ENCODE measurements at regions of chr10 and their contacts with region 1.

Region 1: GRCh38 chr10:26860443-26861204 is at the start of gene ABI1:
- DNase-seq: peak; percentile 100
- ATAC-seq: peak; percentile 90
- H3K4me3 ChIP-seq: peak within 1 kb of the TSS; percentile 89 to 100 (median 99)
- H3K4me3 Mint-ChIP-seq: peak within 1 kb of the TSS; percentile 95
- H3K27ac ChIP-seq: peak within 1 kb of the TSS; percentile 88 to 94
- H3K27ac Mint-ChIP-seq: peak within 1 kb of the TSS; percentile 98
- H3K4me1 ChIP-seq: peaks cover 38% of the 10 kb centered on the region in 2 donors
- H3K4me1 Mint-ChIP-seq: peaks cover 34% of the 10 kb centered on the region
- H3K27me3 ChIP-seq: no peaks in the 10 kb centered on the region
- H3K27me3 Mint-ChIP-seq: no peaks in the 10 kb centered on the region
- CTCF ChIP-seq: no peak
- total RNA-seq, gene ABI1: 78.3 and 80.5 TPM in 2 replicates

Region 2: GRCh38 chr10:26448706-26449435 is 411.8 kb before region 1 on chr10:
- CTCF ChIA-PET with region 1: no interaction called
- POLR2A ChIA-PET with region 1: interaction called, 7 read pairs
- intact Hi-C with region 1: loop called (anchors 10 kb)
- DNase-seq: peak; percentile 90
- ATAC-seq: peak; percentile 76
- H3K4me3 ChIP-seq: peak overlapping the region; percentile 18 to 61 (median 33)
- H3K4me3 Mint-ChIP-seq: peak overlapping the region; percentile 79
- H3K27ac ChIP-seq: peak overlapping the region; percentile 91 to 96
- H3K27ac Mint-ChIP-seq: peak overlapping the region; percentile 96
- H3K4me1 ChIP-seq: peaks cover 70 to 73% of the 10 kb centered on the region in 2 donors
- H3K4me1 Mint-ChIP-seq: peaks cover 87% of the 10 kb centered on the region
- H3K27me3 ChIP-seq: no peaks in the 10 kb centered on the region
- H3K27me3 Mint-ChIP-seq: no peaks in the 10 kb centered on the region
- CTCF ChIP-seq: no peak

Region 3: GRCh38 chr10:26737730-26738129 is 122.9 kb before region 1 on chr10:
- CTCF ChIA-PET with region 1: interaction called, 3 read pairs
- POLR2A ChIA-PET with region 1: interaction called, 3 read pairs
- intact Hi-C with region 1: loop called (anchors 1 kb)
- DNase-seq: peak; percentile 86
- ATAC-seq: peak; percentile 69
- H3K4me3 ChIP-seq: no peak overlapping the region
- H3K4me3 Mint-ChIP-seq: peak overlapping the region; percentile 52
- H3K27ac ChIP-seq: peak overlapping the region; percentile 87
- H3K27ac Mint-ChIP-seq: peak overlapping the region; percentile 89
- H3K4me1 ChIP-seq: peaks cover 36 to 49% of the 10 kb centered on the region in 2 donors
- H3K4me1 Mint-ChIP-seq: peaks cover 50% of the 10 kb centered on the region
- H3K27me3 ChIP-seq: no peaks in the 10 kb centered on the region
- H3K27me3 Mint-ChIP-seq: no peaks in the 10 kb centered on the region
- CTCF ChIP-seq: no peak

Region 4: DNA sequence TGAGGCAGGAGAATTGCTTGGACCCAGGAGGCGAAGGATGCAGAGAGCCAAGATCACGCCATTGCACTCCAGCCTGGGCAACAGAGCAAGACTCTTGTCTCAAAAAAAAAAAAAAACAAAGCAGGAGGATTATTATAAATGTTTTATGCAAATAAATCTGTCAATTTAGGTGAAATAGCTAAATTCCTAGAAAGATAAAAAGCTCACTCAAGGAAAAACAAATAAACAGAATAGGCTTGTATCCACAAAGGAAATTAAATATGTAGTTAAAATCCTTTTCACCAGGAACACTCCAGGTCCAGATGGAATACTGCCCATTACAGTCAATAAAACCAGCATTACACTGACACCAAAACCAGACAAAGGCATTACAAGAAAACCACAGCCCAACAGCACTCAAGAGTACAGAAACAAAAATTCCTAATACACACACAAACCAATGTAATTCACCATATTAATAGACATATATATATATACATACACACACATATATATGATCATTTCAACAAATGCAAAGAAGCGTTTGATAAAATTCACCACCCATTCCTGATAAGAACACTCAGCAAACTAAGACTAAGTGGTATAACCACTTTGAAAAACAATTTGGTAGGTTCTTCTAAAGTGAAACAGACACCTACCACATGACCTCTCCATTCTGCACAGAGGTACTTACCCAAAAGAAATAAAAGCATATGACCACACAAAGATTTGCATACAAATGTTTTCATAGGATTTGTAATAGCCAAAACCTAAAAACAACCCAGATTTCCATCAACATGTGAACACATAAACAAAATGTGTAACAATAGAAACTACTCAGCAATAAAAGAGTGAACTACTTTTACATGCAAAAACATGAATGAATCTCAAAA is 38.7 kb before region 1 on chr10:
- CTCF ChIA-PET with region 1: no interaction called
- POLR2A ChIA-PET with region 1: interaction called, 3 read pairs
- intact Hi-C with region 1: loop called (anchors 5 kb)
- DNase-seq: no peak
- ATAC-seq: no peak
- H3K4me3 ChIP-seq: no peak overlapping the region
- H3K4me3 Mint-ChIP-seq: no peak overlapping the region
- H3K27ac ChIP-seq: peak overlapping the region in 1 of 2 donors; percentile 45
- H3K27ac Mint-ChIP-seq: no peak overlapping the region
- H3K4me1 ChIP-seq: peaks cover 4 to 17% of the 10 kb centered on the region in 2 donors
- H3K4me1 Mint-ChIP-seq: peaks cover 61% of the 10 kb centered on the region
- H3K27me3 ChIP-seq: no peaks in the 10 kb centered on the region
- H3K27me3 Mint-ChIP-seq: no peaks in the 10 kb centered on the region
- CTCF ChIP-seq: no peak

Region 5: DNA sequence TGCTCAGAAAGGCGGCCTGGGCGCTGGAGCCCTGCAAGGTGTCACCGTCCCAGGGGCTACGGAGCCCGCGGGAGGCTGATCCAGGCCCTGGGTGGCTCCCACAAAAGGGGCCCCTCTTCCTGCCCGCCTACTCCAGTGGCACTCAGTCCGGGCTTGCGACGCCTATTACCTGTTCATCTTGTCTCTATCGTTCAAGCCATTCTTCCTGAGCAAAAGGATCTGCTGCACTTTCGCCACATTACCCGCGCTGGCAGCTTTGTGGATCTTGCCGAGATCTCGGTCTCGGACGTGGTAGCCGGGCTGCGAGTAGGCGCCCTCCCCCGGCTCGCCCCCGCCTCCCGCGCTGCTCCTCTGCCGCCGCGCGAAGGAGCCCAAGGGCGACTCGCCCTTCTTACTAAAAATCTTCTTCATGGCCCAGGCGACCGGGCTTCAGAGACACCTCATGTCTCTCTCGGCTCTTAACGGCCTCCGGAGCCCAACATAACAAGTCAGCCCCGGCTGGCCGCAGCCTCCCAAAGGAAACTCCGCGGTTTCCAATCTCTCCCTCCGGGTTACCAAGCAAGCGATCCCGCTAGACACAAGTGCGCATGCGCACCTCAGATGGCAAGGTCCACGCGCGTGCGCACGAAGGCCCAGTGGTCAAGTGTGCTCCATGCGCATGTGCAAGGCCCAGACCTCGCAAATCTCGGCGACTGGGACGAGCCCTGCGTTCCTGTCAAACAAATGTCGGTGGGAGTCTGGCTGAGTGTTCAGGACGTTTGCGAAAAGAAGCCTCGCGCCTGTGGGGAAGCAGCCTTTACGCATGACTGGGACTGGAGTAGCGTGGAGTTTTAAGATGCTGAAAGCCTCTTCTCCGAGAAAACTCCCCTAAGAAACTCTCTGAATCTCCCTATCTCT is 239.5 kb after region 1 on chr10 and contains the start of gene ANKRD26:
- CTCF ChIA-PET with region 1: no interaction called
- POLR2A ChIA-PET with region 1: no interaction called
- intact Hi-C with region 1: loop called (anchors 2 kb)
- DNase-seq: peak; percentile 97
- ATAC-seq: peak; percentile 87
- H3K4me3 ChIP-seq: peak within 1 kb of the TSS; percentile 73 to 92 (median 84)
- H3K4me3 Mint-ChIP-seq: peak within 1 kb of the TSS; percentile 86
- H3K27ac ChIP-seq: peak within 1 kb of the TSS; percentile 81
- H3K27ac Mint-ChIP-seq: peak within 1 kb of the TSS; percentile 97
- H3K4me1 ChIP-seq: peaks cover 13 to 18% of the 10 kb centered on the region in 2 donors
- H3K4me1 Mint-ChIP-seq: peaks cover 25% of the 10 kb centered on the region
- H3K27me3 ChIP-seq: no peaks in the 10 kb centered on the region
- H3K27me3 Mint-ChIP-seq: no peaks in the 10 kb centered on the region
- CTCF ChIP-seq: no peak
- total RNA-seq, gene ANKRD26: 10.5 and 13.5 TPM in 2 replicates

Region 6: DNA sequence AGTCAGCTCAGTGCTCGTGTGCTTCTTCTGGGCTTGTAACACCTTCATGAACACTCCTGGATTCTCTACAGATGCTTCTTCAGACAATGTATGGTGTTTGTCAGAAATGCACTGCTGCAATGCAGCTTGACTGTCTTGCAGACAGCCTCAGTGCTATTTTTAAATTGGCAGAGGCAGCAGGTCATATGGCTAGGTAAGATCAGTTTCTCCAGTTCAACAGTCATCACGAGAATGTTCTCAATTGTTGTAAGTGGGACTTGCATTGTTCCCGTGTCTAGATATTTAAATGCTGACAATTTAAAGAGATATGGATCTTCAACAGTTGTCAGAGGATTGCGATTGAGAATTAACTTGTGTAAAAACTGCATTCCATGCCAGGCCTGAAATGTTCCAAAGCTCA is 387.6 kb after region 1 on chr10:
- CTCF ChIA-PET with region 1: no interaction called
- POLR2A ChIA-PET with region 1: no interaction called
- intact Hi-C with region 1: no loop called
- DNase-seq: no peak
- ATAC-seq: no peak
- H3K4me3 ChIP-seq: no peak overlapping the region
- H3K4me3 Mint-ChIP-seq: no peak overlapping the region
- H3K27ac ChIP-seq: no peak overlapping the region
- H3K27ac Mint-ChIP-seq: no peak overlapping the region
- H3K4me1 ChIP-seq: peaks cover 7 to 13% of the 10 kb centered on the region in 2 donors
- H3K4me1 Mint-ChIP-seq: peaks cover 11% of the 10 kb centered on the region
- H3K27me3 ChIP-seq: no peaks in the 10 kb centered on the region
- H3K27me3 Mint-ChIP-seq: no peaks in the 10 kb centered on the region
- CTCF ChIP-seq: no peak

Measured in B cell (primary cell).